ENCODE measurements at regions of chr3 and their contacts with region 1.

Region 1: DNA sequence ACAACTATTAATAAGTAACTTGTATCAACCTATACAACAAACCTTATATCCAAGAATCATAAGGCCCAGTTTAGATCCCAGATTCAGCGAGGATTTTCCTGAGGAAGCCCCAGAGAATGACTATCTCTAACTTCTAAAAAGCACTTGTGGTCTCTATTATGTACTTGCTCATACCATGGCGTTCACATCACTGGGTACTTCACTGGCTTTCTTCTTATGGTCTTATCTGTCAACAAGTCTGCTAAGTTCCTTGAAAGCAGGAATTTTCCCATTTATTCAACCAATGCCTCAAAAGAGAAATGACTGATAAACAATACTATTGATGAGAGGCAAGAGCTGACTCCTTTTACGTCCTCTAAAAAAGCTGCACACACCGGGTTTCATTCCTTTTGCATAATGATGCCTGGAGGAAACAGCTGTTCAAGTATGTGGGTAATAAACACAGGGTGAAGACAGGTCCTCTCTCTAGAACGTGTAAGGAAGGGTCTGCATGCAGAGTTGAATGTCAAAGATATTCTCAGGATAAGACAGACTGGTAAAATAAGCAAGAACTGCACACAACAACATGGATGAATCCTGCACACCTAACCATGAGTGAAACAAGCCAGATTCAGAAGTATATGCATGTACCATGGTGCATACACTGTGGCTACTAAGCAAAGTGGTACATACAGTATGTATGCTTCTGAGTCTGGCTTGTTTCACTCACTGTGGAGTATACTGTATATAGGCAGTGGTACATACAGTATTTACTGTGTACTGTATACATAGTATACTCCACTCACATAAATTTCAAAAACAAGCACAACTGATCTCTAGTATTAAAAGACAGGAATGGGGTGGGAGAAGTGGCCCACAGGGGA is 408.7 kb downstream of the SHQ1 start:
- DNase-seq: no peak
- ATAC-seq: no peak

Region 2: DNA sequence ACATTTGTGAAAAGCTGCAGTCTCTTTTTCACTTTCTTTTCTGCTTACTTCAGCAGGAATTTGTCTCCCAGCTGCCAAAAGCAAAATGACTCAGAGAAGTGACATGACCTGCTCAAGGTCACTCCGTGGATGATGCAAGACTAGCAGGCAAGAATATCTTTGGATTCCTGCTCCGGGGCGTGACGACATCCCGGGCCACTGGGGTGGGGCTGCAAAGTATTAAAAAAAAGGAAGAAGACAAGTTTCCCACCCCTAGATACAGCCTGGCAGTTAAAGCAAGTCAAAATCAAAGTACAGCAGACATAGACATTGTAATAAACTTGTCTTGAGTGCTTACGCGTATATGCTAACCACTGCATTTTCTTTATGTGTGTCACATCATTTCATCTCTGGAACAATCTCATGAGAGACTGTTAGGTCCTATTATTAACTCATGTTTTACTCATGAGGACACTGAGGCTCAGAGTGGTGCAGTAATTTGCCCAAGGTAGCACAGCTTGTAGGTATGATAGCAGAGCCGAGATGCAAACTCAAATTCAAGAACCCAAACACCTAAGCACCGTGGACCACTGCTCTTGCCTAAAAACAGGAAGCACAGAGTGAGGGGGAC is 169.4 kb before region 1 on chr3:
- intact Hi-C with region 1: no loop called
- DNase-seq: peak; percentile 91
- ATAC-seq: peak; percentile 89 to 91

Region 3: DNA sequence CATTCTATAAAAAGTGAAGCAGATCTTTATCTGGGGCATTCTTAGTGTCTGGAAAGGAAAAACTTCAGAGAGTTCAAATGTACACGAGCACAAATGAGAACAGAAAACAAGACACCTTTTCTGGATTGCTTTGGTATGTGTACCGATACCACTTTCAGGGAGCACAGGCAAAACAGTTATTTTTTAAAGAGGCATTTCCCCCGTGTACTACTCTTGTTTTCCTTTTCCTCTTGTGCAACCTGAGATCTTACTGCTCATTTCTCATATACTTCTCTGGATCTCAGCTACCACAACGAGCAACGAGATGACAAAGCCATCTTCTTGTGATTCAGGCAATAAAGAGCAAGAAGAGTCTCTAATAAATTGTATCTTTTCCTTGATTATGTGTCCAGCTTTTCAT is 55.0 kb before region 1 on chr3:
- intact Hi-C with region 1: loop called in 1 of 2 experiments (anchors 5 kb)
- DNase-seq: no peak
- ATAC-seq: no peak

Region 4: DNA sequence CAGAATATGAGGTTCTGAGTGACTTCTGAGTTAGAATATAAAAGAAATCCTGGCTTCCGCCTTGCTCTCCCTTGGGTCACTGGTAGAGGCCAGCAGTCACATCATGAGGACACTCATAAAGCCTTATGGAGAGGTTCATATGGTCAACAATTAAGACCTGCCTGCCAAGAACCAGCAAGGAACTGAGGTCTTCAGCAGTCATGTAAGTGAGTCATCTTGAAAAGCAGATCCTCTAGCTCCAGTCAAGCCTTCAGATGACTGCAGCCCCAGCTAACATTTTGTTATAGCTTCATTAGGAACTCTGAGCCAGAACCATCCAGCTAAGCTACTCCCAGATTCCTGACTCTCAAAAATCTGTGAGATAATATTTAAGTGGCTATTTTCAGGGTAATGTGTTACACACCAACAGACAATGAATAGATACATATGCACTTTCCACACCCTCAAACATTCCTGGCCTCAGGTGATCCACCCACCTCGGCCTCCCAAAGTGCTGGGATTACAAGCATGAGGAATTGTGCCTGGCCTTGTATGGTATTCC is 38.5 kb before region 1 on chr3:
- intact Hi-C with region 1: loop called in 1 of 2 experiments (anchors 5 kb)
- DNase-seq: no peak
- ATAC-seq: no peak

Measured in left cardiac atrium (tissue), 4 donors.